Adrenal gland (tissue), 19 donors: ENCODE measurements at regions of chr2 and their contacts with region 1.

Region 1: GRCh38 chr2:142682528-142682927 is 194.9 kb upstream of the KYNU start:
- DNase-seq: no peak
- H3K4me3 ChIP-seq: no peak overlapping the region
- H3K27ac ChIP-seq: no peak overlapping the region
- H3K4me1 ChIP-seq: no peaks in the 10 kb centered on the region
- H3K27me3 ChIP-seq: no peaks in the 10 kb centered on the region
- CTCF ChIP-seq: peak in 5 of 6 experiments; percentile 24 to 57 (median 47)
- POLR2A ChIP-seq: no peak

Region 2: GRCh38 chr2:142742371-142743214 is 60.1 kb after region 1 on chr2:
- intact Hi-C with region 1: no loop called
- DNase-seq: no peak
- H3K4me3 ChIP-seq: no peak overlapping the region
- H3K27ac ChIP-seq: no peak overlapping the region
- H3K4me1 ChIP-seq: peaks cover 0 to 14% of the 10 kb centered on the region in 2 donors
- H3K27me3 ChIP-seq: no peaks in the 10 kb centered on the region
- CTCF ChIP-seq: no peak
- POLR2A ChIP-seq: no peak

Region 3: DNA sequence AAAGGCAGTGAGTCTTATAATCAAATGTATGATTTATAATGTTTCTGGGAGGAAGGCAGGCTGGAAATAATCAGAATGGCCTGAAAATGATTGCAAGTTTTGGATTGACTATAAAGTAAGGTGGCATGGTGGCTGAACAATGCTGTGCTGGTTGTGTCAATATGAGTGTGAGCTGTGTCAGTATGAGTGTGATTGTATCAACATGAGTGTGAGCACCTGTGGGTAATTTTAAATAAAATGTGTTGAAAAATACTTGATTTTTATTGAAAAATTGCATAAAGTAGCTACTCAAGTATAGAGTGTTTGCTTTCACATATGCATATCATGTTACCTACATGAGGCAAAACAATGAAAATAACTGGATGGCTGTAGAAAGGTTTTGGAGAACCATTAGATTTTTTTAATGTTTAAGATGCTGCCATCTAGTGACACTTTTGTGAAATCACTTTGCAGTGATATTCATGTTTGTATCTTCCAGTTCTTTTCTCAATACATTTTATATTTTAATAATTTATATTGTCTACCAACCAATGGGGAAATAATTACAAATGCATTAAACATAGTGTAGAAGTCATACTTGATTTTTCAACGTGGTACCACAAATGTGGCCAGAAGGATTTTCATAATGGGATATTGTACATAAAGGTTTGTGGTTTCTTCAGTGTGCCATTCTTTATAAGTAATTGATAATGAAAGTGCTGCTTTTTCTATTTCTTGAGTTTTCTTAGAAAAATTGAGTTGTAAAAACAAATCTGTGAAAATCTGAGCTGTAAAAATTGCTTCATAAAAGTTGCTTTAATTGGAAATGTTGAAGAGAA is 298.2 kb after region 1 on chr2:
- intact Hi-C with region 1: loop called (anchors 5 to 10 kb)
- DNase-seq: no peak
- H3K4me3 ChIP-seq: no peak overlapping the region
- H3K27ac ChIP-seq: no peak overlapping the region
- H3K4me1 ChIP-seq: no peaks in the 10 kb centered on the region
- H3K27me3 ChIP-seq: no peaks in the 10 kb centered on the region
- CTCF ChIP-seq: peak; percentile 46 to 74 (median 57)
- POLR2A ChIP-seq: no peak

Region 4: DNA sequence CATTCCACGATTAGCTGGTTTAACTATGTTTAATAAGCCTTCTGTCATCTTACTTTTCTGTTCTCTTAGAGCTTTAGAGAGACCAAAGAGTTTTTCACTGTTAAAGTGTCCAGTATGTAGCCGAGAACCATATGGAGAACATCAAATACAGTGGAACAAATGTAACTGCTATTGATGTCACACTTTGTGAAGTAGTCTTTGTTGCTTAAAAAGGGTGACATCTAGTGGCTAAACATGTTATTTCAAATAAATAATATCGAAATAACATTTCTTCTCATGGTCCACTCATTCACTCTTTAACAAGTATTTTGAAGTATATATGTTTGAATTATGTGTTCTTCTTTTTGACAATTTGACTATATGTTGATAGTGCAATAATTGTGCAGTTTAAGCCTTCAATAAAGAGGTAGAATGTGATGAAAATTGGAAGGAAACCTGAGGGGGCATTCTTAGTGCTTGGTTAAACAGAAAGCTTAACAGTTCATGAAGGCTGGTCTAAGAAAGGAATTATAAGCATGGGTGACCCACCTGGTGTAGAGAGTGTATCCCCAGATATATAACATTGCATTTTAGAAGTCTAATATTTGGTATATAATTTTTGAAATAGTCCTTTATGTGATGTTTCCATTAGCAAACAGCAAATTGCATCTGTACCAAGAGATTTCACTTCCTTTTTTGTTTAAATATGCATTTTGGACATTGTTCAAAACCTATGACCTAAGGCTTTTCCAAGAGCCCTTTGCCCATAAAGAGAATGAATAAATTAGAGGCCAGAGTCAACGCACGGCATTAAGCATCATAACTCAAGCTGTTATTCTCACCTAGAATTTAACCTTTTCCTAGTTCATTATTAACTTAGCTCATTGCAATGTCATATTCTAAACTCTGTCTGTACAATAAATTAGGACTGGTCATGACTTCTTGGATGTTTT is 307.0 kb after region 1 on chr2:
- intact Hi-C with region 1: loop called (anchors 5 to 10 kb)
- DNase-seq: no peak
- H3K4me3 ChIP-seq: no peak overlapping the region
- H3K27ac ChIP-seq: no peak overlapping the region
- H3K4me1 ChIP-seq: peaks cover 0 to 10% of the 10 kb centered on the region in 2 donors
- H3K27me3 ChIP-seq: no peaks in the 10 kb centered on the region
- CTCF ChIP-seq: peak; percentile 38 to 66 (median 52)
- POLR2A ChIP-seq: no peak